Caco-2 (cell line): ENCODE measurements at regions of chrX and their contacts with region 1.

Region 1: DNA sequence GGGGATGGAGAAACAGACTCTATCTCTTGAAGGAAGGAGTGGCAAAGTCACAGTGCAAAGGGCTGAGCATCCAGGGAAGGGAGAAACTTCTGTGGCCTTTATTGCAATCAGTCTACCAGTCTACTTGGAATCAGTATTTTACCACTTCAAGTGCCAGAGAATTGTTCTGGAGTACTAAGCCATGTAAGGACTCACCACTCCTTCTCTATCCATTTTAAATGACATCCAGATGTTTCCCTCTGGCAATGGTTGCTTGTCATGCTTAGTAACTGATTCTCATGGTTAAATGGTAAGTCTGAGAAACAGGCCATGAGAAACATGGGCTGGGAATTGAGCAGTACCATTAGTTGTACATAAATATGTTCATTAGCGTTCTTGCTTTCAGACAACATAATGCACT is 21.1 kb upstream of the SMIM10 start:
- DNase-seq: no peak
- H3K4me3 ChIP-seq: no peak overlapping the region
- H3K4me3 Mint-ChIP-seq: no peak overlapping the region
- H3K27ac Mint-ChIP-seq: no peak overlapping the region
- H3K4me1 ChIP-seq: no peaks in the 10 kb centered on the region
- H3K4me1 Mint-ChIP-seq: peaks cover 6% of the 10 kb centered on the region
- H3K27me3 ChIP-seq: no peaks in the 10 kb centered on the region
- H3K27me3 Mint-ChIP-seq: no peaks in the 10 kb centered on the region
- CTCF ChIP-seq: no peak

Region 2: GRCh38 chrX:135003876-135004623 is 34.3 kb after region 1 on chrX:
- CTCF ChIA-PET with region 1: no interaction called
- POLR2A ChIA-PET with region 1: no interaction called
- intact Hi-C with region 1: loop called (anchors 1 kb)
- DNase-seq: peak; percentile 91 to 93
- H3K4me3 ChIP-seq: peak overlapping the region; percentile 53
- H3K4me3 Mint-ChIP-seq: peak overlapping the region; percentile 80
- H3K27ac Mint-ChIP-seq: peak overlapping the region; percentile 63
- H3K4me1 ChIP-seq: peaks cover 7% of the 10 kb centered on the region; the same call in 1 of the 2 replicates
- H3K4me1 Mint-ChIP-seq: peaks cover 6% of the 10 kb centered on the region
- H3K27me3 ChIP-seq: no peaks in the 10 kb centered on the region
- H3K27me3 Mint-ChIP-seq: no peaks in the 10 kb centered on the region
- CTCF ChIP-seq: no peak

Region 3: DNA sequence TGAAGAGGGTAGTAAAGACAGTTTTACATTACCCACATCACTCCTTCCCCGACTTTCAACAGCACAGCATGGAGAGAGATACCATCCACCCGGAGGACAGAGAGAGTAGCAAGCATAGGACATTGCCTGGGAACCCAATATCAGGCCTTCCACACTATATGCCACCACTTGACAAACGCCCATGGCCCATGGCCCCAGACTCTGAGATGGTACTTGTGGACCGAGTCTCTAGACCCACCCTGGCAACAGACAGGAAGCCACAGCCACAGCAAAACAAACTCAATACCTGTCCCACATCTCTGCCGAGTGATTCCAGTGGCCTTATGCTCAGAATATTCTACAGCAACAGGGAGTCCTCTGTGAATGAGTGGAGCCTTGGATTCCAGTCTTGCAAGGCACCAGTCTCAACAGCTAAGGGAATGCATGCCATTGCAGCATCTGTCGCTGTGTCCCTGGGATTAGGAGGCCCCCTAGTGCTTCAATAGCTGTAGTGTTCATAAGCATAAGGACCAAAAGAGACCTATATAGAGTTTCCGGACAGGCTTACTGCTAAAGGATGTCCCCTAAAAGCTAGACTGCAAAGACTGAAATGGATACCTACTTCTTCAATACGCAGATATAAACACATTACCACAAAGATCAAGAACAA is 216.2 kb after region 1 on chrX:
- CTCF ChIA-PET with region 1: no interaction called
- POLR2A ChIA-PET with region 1: no interaction called
- intact Hi-C with region 1: loop called (anchors 1 kb)
- DNase-seq: peak; percentile 46 to 48
- H3K4me3 ChIP-seq: no peak overlapping the region
- H3K4me3 Mint-ChIP-seq: no peak overlapping the region
- H3K27ac Mint-ChIP-seq: no peak overlapping the region
- H3K4me1 ChIP-seq: no peaks in the 10 kb centered on the region
- H3K4me1 Mint-ChIP-seq: no peaks in the 10 kb centered on the region
- H3K27me3 ChIP-seq: no peaks in the 10 kb centered on the region
- H3K27me3 Mint-ChIP-seq: peaks cover 23% of the 10 kb centered on the region
- CTCF ChIP-seq: peak; percentile 34 to 68